ENCODE measurements at regions of chr4 and their contacts with region 1.

Region 1: DNA sequence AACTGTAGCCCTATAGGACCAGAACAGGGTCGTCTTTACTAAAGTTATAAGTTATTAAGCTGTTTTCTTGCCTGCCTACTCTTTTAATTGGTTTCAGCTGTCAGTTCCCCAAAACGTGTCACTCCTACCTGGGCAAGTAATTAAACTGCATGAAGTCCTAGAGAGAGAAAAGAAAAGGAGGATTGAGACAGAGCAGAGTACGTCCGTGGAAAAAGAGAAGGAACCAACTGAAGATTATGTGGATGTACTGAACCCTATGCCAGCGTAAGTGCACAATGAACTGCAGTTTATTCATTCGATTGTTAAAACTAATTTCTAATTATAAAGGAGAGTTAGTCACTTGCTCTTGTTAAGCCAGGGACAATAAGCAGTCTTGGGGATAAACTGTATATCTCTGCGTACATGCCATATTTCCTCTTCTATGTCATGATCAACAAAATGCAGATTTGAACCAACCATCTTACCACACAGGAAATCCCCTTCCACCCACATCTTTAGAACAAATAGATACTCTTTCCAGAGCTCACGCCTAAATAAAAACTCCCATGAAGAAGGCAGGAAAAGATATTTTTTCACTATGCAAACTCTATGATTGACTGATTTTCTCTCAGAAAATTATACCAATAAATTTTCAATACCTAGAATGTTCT is 22.8 kb downstream of the STAP1 start:
- DNase-seq: peak in 6 of 10 donors; percentile 8 to 74 (median 41)
- ATAC-seq: peak; percentile 95 to 97
- H3K4me3 Mint-ChIP-seq: peak overlapping the region; percentile 0 to 71 (median 64)
- H3K27ac Mint-ChIP-seq: peak overlapping the region in 7 of 10 donors; percentile 5 to 80 (median 43)
- H3K4me1 Mint-ChIP-seq: peaks cover 9 to 54% (median 33%) of the 10 kb centered on the region in 4 donors
- H3K27me3 Mint-ChIP-seq: no peaks in the 10 kb centered on the region

Region 2: GRCh38 chr4:67531379-67531962 is 49.9 kb before region 1 on chr4:
- POLR2A ChIA-PET with region 1: no interaction called
- DNase-seq: no peak
- ATAC-seq: no peak
- H3K4me3 Mint-ChIP-seq: peak overlapping the region in 1 of 10 donors; percentile 33
- H3K27ac Mint-ChIP-seq: peak overlapping the region in 3 of 10 donors; percentile 12 to 77 (median 56)
- H3K4me1 Mint-ChIP-seq: peaks cover 13 to 58% (median 45%) of the 10 kb centered on the region in 4 donors
- H3K27me3 Mint-ChIP-seq: no peaks in the 10 kb centered on the region

Region 3: DNA sequence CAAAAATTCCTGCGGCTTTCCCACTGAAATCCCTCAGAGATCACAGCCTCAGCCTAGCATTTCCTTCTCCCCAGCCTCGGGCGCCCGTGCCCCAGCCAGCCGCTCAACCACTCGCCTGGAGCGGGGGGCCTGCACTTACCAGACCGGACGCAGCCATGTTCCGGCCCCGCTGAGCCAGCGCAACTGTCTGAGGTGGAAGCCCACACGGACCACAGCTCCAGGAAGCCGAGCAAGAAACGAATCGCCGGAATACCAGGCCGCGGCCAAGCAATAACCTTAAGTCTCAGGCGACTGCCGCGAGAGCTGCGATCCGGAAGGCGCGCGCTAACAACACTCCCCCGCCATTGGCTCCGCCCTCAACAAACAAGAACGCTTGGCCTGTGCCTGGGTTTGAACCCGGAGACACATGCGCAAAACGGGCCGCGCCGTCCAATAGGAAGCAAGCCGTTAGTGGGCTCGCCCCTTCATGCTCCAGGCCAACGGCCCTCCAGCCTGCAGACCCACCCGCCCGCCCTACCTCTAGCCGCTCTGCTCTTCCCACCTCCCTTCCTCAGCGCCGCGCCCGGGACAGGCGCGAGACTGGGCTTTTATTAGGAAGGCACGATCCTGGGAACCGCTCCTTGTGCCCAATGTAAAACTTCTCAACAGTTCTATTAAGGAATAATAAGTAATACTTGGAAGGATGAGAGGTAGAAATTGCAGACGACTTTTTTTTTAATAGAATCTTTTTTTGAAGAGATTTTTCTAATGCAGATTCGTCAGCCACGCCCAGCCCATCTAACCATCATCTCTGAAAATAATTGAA is 35.9 kb before region 1 on chr4 and contains the start of gene CENPC:
- POLR2A ChIA-PET with region 1: interaction called, 10 read pairs
- DNase-seq: peak; percentile 77 to 96 (median 90)
- ATAC-seq: peak; percentile 85 to 93
- H3K4me3 Mint-ChIP-seq: peak within 1 kb of the TSS; percentile 94 to 100 (median 98)
- H3K27ac Mint-ChIP-seq: peak within 1 kb of the TSS; percentile 97 to 100 (median 100)
- H3K4me1 Mint-ChIP-seq: peaks cover 19 to 44% (median 37%) of the 10 kb centered on the region in 4 donors
- H3K27me3 Mint-ChIP-seq: no peaks in the 10 kb centered on the region
- polyA plus RNA-seq, gene CENPC: 16.1 to 19.7 (median 18.6) TPM

Region 4: DNA sequence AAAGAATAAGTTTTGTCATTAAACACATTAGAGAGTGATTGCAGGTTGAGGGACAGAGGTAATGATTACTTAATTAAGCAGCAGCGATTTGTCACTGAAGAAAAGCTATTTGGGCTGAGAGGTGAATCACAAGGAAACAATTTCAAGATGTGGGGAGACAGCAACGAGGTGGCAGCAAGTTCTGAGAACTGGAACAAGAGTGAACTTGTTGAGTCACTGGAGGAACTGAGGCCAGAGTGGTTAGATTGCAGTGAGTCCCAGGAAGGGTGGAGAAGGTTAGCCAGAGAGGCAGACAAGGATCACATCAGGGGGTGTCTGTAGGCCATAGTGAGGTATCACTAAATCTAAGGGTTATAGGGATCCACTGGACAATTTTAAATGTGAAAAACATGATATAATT is 439.9 kb after region 1 on chr4:
- POLR2A ChIA-PET with region 1: no interaction called
- DNase-seq: no peak
- ATAC-seq: no peak
- H3K4me3 Mint-ChIP-seq: no peak overlapping the region
- H3K27ac Mint-ChIP-seq: no peak overlapping the region
- H3K4me1 Mint-ChIP-seq: no peaks in the 10 kb centered on the region
- H3K27me3 Mint-ChIP-seq: peaks cover 0 to 12% (median 7%) of the 10 kb centered on the region in 5 donors

Measured in naive thymus-derived CD8-positive, alpha-beta T cell (primary cell).